IMR-90 (cell line): ENCODE measurements at regions of chr13 and their contacts with region 1.

Region 1: GRCh38 chr13:23673354-23673753 is 103.1 kb downstream of the TNFRSF19 start:
- DNase-seq: peak; percentile 99
- ATAC-seq: peak; percentile 64
- H3K4me3 ChIP-seq: no peak overlapping the region
- H3K27ac ChIP-seq: peak overlapping the region; percentile 100; the same call in 1 of the 2 replicates
- H3K4me1 ChIP-seq: peaks cover 39% of the 10 kb centered on the region
- H3K27me3 ChIP-seq: no peaks in the 10 kb centered on the region
- CTCF ChIP-seq: no peak
- POLR2A ChIP-seq: peak; percentile 88
- RAD21 ChIP-seq: peak; percentile 41

Region 2: GRCh38 chr13:23510979-23511735 is 162.2 kb before region 1 on chr13:
- CTCF ChIA-PET with region 1: no interaction called
- POLR2A ChIA-PET with region 1: no interaction called
- dilution Hi-C with region 1: no loop called
- in situ Hi-C with region 1: no loop called
- intact Hi-C with region 1: loop called (anchors 5 kb)
- DNase-seq: peak; percentile 75
- ATAC-seq: peak; percentile 27; the same call in 1 of the 2 replicates
- H3K4me3 ChIP-seq: no peak overlapping the region
- H3K27ac ChIP-seq: peak overlapping the region; percentile 10; the same call in 1 of the 2 replicates
- H3K4me1 ChIP-seq: peaks cover 14% of the 10 kb centered on the region
- H3K27me3 ChIP-seq: no peaks in the 10 kb centered on the region
- CTCF ChIP-seq: peak; percentile 31; the same call in 1 of the 2 replicates
- POLR2A ChIP-seq: no peak
- RAD21 ChIP-seq: peak; percentile 30

Region 3: GRCh38 chr13:23579072-23579895 is 94.1 kb before region 1 on chr13:
- CTCF ChIA-PET with region 1: interaction called, 3 read pairs
- POLR2A ChIA-PET with region 1: no interaction called
- dilution Hi-C with region 1: no loop called
- in situ Hi-C with region 1: no loop called
- intact Hi-C with region 1: loop called (anchors 2 kb)
- DNase-seq: peak; percentile 87
- ATAC-seq: peak; percentile 98
- H3K4me3 ChIP-seq: peak overlapping the region; percentile 91
- H3K27ac ChIP-seq: peak overlapping the region; percentile 79
- H3K4me1 ChIP-seq: peaks cover 4% of the 10 kb centered on the region
- H3K27me3 ChIP-seq: no peaks in the 10 kb centered on the region
- CTCF ChIP-seq: no peak
- POLR2A ChIP-seq: peak; percentile 26
- RAD21 ChIP-seq: no peak

Region 4: DNA sequence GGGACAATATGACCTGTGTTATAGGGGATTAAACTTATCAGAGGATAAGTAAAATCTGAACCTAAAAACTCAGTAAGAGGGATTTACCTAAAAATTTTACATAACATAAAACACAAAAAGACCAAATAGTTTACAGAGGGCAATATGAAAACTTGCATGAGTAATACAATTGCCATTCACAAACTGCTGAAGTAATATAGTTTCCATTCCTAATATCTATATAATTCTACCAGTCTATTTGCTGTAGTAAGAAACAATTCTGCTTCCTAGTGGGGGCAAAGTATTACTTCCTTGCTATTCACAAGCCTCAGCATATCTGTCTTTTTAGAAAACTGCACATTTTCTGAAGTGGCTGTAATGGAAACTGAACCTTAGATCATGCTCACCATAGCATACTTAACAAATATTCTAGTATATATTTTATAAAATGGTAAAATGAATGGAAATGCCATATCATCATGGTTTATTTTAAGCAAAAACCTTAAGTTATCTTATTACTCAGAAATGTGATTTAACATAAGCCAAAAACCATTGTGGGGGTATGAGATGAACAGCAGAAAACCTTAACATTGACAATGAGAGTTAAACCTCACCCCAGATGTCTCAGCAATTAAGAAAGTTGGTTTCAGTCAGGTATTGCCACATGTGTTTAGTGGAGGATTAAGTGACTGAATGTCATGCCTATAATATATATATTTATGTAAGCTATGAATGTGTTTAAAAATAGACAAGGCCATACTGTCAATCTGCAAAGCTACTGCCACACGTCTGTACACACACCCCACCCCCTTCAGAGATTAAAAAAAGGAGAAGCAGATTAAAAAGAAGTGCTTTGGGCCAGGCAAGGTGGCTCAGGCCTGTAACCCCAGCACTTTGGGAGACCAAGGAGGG is 79.0 kb after region 1 on chr13:
- CTCF ChIA-PET with region 1: no interaction called
- POLR2A ChIA-PET with region 1: no interaction called
- dilution Hi-C with region 1: no loop called
- in situ Hi-C with region 1: no loop called
- intact Hi-C with region 1: loop called (anchors 5 kb)
- DNase-seq: peak; percentile 56
- ATAC-seq: peak; percentile 38
- H3K4me3 ChIP-seq: no peak overlapping the region
- H3K27ac ChIP-seq: peak overlapping the region; percentile 99
- H3K4me1 ChIP-seq: peaks cover 27% of the 10 kb centered on the region
- H3K27me3 ChIP-seq: no peaks in the 10 kb centered on the region
- CTCF ChIP-seq: no peak
- POLR2A ChIP-seq: no peak
- RAD21 ChIP-seq: no peak

Region 5: GRCh38 chr13:23794267-23795161 is 121.2 kb after region 1 on chr13:
- CTCF ChIA-PET with region 1: no interaction called
- POLR2A ChIA-PET with region 1: no interaction called
- dilution Hi-C with region 1: no loop called
- in situ Hi-C with region 1: no loop called
- intact Hi-C with region 1: loop called (anchors 5 kb)
- DNase-seq: peak; percentile 85
- ATAC-seq: peak; percentile 24
- H3K4me3 ChIP-seq: no peak overlapping the region
- H3K27ac ChIP-seq: peak overlapping the region; percentile 98
- H3K4me1 ChIP-seq: peaks cover 27% of the 10 kb centered on the region
- H3K27me3 ChIP-seq: no peaks in the 10 kb centered on the region
- CTCF ChIP-seq: no peak
- POLR2A ChIP-seq: no peak
- RAD21 ChIP-seq: no peak